ENCODE measurements at regions of chr9 and their contacts with region 1.

Region 1: GRCh38 chr9:105157130-105157583 is 87.3 kb upstream of the SLC44A1 start:
- DNase-seq: peak; percentile 47
- ATAC-seq: peak; percentile 86 to 89

Region 2: GRCh38 chr9:104826907-104827306 is 330.2 kb before region 1 on chr9:
- intact Hi-C with region 1: no loop called
- DNase-seq: no peak
- ATAC-seq: peak in 1 of 2 donors; percentile 16

Region 3: DNA sequence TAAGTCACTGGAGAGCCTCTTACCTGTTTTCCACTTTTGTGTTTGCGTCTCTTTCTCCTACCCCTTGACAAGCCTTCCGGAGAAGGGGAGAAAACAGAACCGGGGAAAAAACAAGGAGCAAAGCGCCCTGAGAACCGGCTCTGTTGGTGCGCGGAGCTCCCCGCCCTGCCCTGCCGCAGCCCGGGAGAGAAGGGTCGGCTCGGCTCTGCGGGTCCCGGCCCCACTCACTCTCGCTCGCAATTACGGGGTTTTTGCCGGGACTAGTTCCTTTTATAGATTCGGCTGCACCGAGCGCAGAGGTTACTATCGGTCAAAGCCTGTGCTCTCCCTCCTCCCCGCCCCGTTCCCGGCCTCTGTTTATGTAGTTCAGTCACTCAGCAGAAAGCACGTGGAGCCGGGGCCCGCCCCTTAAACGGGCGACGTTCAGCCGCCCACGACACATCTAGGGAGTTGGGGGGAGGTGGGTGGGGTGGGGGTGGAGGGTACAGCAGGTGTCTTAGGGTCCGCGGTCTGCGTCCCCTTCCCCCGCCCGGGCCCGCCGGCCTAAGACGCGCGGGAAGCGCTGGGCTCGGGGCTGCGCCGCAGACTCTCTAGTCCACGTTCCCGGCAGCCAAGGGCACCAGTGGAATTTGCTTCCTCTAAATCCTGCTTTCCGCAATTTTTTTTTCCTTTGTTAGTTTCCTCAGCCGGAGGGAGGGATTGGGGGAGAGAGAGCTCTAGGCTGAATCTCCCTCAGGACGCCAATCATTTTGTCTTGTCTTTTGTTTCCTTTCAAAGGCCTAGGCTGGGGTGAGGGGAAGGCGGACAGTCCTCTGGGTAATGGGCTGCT is 229.0 kb before region 1 on chr9 and contains the start of gene ABCA1:
- intact Hi-C with region 1: loop called (anchors 1 to 10 kb)
- DNase-seq: peak; percentile 93
- ATAC-seq: peak; percentile 87 to 89
- total RNA-seq, gene ABCA1: 8.3 to 19.8 TPM

Region 4: GRCh38 chr9:104991144-104991953 is 165.8 kb before region 1 on chr9:
- intact Hi-C with region 1: loop called in 1 of 2 experiments (anchors 10 kb)
- DNase-seq: peak; percentile 93
- ATAC-seq: peak; percentile 87 to 92

Measured in left cardiac atrium (tissue), 4 donors.